Breast epithelium (tissue), 4 donors: ENCODE measurements at regions of chr10 and their contacts with region 1.

Region 1: DNA sequence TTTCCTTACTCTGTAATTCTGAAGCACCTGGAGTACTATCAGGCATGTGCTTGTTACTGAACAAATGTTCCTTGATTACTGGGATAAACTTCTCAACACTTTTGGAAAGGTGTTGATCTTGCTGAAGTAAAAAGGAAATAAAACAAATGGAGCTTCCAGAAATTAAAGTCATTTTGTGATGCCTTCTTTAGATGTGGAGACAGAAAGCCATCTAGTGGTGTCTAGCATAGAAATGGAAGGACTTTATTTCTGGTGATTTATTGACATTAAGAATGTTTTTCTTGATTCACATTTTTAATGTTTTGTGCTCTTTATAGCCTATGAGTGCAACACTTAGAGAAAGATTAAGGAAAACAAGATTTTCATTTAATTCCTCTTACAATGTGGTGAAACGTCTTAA is 1.4 kb downstream of the SFR1 start:
- DNase-seq: no peak
- H3K4me3 ChIP-seq: no peak overlapping the region
- H3K27ac ChIP-seq: no peak overlapping the region
- H3K4me1 ChIP-seq: peaks cover 0 to 3% of the 10 kb centered on the region in 2 donors
- H3K27me3 ChIP-seq: no peaks in the 10 kb centered on the region
- CTCF ChIP-seq: no peak
- POLR2A ChIP-seq: no peak

Region 2: GRCh38 chr10:104139221-104139620 is 15.8 kb after region 1 on chr10:
- intact Hi-C with region 1: loop called (anchors 1 kb)
- DNase-seq: no peak
- H3K4me3 ChIP-seq: no peak overlapping the region
- H3K27ac ChIP-seq: no peak overlapping the region
- H3K4me1 ChIP-seq: no peaks in the 10 kb centered on the region
- H3K27me3 ChIP-seq: no peaks in the 10 kb centered on the region
- CTCF ChIP-seq: no peak
- POLR2A ChIP-seq: no peak